Mucosa of descending colon (tissue), 3 donors: ENCODE measurements at regions of chr5 and their contacts with region 1.

Region 1: DNA sequence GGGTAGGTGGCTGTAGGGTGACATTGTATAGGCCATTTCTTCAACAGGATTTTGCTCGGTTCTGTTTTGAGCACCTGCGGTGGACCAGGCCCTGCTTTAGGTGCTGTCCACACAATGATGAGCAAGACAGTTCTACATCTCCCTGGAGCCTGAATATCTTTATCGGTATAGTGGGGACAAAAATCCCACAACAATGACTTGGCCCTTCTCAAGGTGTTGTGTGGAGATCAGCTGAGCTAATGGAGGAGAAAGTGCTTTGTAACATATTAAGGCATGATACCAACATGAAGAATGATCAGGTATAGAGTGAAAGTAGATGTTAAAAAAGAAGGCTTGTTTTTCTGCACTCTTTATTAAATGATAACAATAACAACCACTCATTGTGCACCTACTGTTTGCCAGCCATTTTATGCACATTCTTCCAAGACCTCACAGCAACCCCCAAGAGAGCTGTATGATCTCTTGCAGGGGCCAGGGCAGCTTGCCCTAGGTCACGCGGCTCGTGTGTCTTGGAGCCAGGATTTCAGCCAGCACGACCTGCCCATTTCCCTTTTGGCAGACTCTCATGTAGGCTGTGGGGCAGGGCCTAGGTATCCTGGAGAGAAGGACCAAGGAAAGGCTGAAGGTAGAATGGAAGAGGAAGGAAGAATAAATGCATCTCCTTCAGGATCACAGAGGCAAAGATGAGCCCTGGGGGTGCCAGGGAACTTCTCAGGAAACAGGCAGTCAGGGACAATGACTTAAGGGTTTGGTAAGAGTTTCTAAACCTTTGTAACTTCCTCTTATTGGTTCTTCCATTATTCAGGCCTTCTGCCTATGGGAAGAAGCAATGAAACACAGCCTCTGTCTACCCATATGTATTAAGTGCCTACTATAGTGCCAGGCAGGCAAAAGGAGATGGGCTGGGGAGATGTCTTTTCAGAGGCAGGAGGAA is 50.0 kb upstream of the PPARGC1B start:
- DNase-seq: no peak
- ATAC-seq: no peak
- H3K4me3 ChIP-seq: no peak overlapping the region
- H3K4me1 ChIP-seq: peaks cover 10% of the 10 kb centered on the region
- CTCF ChIP-seq: no peak

Region 2: GRCh38 chr5:149406203-149406978 is 273.8 kb before region 1 on chr5:
- intact Hi-C with region 1: no loop called
- DNase-seq: peak; percentile 48 to 73 (median 66)
- ATAC-seq: peak; percentile 60
- H3K4me3 ChIP-seq: no peak overlapping the region
- H3K4me1 ChIP-seq: no peaks in the 10 kb centered on the region
- CTCF ChIP-seq: no peak

Region 3: DNA sequence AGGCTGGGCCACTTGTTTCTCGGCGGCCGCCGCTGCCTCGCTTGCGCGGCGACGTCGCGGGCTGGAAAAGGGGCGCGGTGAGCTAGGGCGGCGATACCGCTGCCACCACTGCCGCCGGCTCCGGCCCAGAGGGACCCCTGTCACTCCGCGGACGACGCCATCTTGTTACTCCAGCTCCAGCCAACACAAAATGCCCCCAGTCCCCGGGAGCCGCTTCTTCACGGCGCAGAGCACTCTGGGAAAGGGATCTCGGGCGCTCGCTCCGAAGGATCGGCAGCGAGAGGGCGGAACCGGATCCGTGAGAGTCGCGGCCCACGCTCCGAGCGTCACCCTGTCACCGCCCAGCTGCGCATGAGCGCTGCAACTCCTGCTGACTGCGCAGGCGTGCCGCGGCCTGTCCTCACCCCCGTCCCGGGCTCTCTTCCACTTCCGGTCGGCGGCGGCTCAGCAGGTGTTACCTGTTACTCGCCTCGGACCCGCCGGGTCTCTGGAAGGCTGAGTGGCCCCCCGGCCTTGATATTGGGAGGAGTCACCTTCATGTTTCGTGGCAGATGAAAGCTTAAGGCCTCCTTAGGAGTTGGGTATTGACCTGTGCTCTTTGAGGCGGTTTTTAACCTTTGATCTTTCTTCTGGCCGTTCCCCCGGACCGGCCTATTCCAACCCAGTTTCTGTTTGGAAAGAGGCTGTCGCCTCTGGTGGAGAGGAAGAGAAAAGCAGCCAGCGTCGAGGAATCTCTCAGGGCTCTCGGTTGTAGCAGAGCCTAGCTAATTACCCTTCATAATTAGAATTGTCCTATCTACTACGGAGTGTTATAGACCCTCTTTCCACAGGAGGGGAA is 128.7 kb before region 1 on chr5 and contains the start of gene CSNK1A1:
- intact Hi-C with region 1: no loop called
- DNase-seq: peak; percentile 98 to 100 (median 99)
- ATAC-seq: peak; percentile 93
- H3K4me3 ChIP-seq: peak within 1 kb of the TSS; percentile 90
- H3K4me1 ChIP-seq: peaks cover 30% of the 10 kb centered on the region
- CTCF ChIP-seq: peak; percentile 60
- total RNA-seq, gene CSNK1A1: 200 to 233 (median 224) TPM

Region 4: GRCh38 chr5:149724130-149724840 is 44.1 kb after region 1 on chr5:
- intact Hi-C with region 1: loop called in 1 of 2 experiments (anchors 10 kb)
- DNase-seq: no peak
- ATAC-seq: no peak
- H3K4me3 ChIP-seq: no peak overlapping the region
- H3K4me1 ChIP-seq: peaks cover 13% of the 10 kb centered on the region
- CTCF ChIP-seq: no peak

Region 5: GRCh38 chr5:150589871-150590601 is 909.9 kb after region 1 on chr5:
- intact Hi-C with region 1: no loop called
- DNase-seq: peak in 2 of 3 donors; percentile 64 to 73
- ATAC-seq: peak; percentile 26
- H3K4me3 ChIP-seq: no peak overlapping the region
- H3K4me1 ChIP-seq: peaks cover 52% of the 10 kb centered on the region
- CTCF ChIP-seq: no peak